CD4-positive, alpha-beta memory T cell (primary cell): ENCODE measurements at regions of chrX and their contacts with region 1.

Region 1: GRCh38 chrX:47581731-47582647 is at the start of gene TIMP1:
- DNase-seq: peak; percentile 63 to 90 (median 71)
- H3K4me3 ChIP-seq: peak within 1 kb of the TSS; percentile 15 to 38
- H3K4me3 Mint-ChIP-seq: peak within 1 kb of the TSS; percentile 67 to 89 (median 80)
- H3K27ac ChIP-seq: peak within 1 kb of the TSS; percentile 52
- H3K27ac Mint-ChIP-seq: peak within 1 kb of the TSS; percentile 80 to 95 (median 84)
- H3K4me1 ChIP-seq: peaks cover 45% of the 10 kb centered on the region
- H3K4me1 Mint-ChIP-seq: peaks cover 30 to 55% (median 44%) of the 10 kb centered on the region in 4 donors
- H3K27me3 ChIP-seq: no peaks in the 10 kb centered on the region
- H3K27me3 Mint-ChIP-seq: no peaks in the 10 kb centered on the region
- total RNA-seq, gene TIMP1: 147 to 156 TPM

Region 2: DNA sequence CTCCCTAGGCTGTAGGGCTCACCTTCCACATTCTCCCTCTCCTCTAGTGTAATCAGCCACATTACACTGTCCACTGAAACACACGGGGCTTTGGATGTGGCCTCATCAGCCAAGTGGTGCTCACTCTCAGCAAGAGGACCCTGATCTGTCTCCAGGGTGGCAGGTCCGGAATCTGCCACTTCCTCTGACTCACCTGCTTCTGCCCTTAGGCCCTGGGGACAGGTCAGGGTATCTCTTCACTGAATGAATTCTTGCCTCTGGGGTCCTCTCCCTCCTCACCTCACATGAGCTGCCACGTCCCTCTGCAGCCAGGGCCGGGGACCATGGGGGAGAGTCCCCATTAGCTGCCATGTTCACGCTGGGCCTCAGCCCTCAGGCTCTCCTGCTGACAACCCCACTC is 114.9 kb before region 1 on chrX:
- CTCF ChIA-PET with region 1: no interaction called
- POLR2A ChIA-PET with region 1: no interaction called
- intact Hi-C with region 1: no loop called
- DNase-seq: no peak
- H3K4me3 ChIP-seq: no peak overlapping the region
- H3K4me3 Mint-ChIP-seq: no peak overlapping the region
- H3K27ac ChIP-seq: no peak overlapping the region
- H3K27ac Mint-ChIP-seq: no peak overlapping the region
- H3K4me1 ChIP-seq: no peaks in the 10 kb centered on the region
- H3K4me1 Mint-ChIP-seq: peaks cover 3 to 11% (median 8%) of the 10 kb centered on the region in 4 donors
- H3K27me3 ChIP-seq: no peaks in the 10 kb centered on the region
- H3K27me3 Mint-ChIP-seq: no peaks in the 10 kb centered on the region

Region 3: GRCh38 chrX:47595716-47596251 is 13.8 kb after region 1 on chrX:
- CTCF ChIA-PET with region 1: no interaction called
- POLR2A ChIA-PET with region 1: interaction called, 42 read pairs
- intact Hi-C with region 1: no loop called
- DNase-seq: no peak
- H3K4me3 ChIP-seq: no peak overlapping the region
- H3K4me3 Mint-ChIP-seq: peak overlapping the region in 5 of 8 donors; percentile 20 to 66 (median 48)
- H3K27ac ChIP-seq: no peak overlapping the region
- H3K27ac Mint-ChIP-seq: peak overlapping the region in 6 of 7 donors; percentile 48 to 89 (median 66)
- H3K4me1 ChIP-seq: peaks cover 19% of the 10 kb centered on the region
- H3K4me1 Mint-ChIP-seq: peaks cover 9 to 24% (median 14%) of the 10 kb centered on the region in 4 donors
- H3K27me3 ChIP-seq: no peaks in the 10 kb centered on the region
- H3K27me3 Mint-ChIP-seq: no peaks in the 10 kb centered on the region

Region 4: DNA sequence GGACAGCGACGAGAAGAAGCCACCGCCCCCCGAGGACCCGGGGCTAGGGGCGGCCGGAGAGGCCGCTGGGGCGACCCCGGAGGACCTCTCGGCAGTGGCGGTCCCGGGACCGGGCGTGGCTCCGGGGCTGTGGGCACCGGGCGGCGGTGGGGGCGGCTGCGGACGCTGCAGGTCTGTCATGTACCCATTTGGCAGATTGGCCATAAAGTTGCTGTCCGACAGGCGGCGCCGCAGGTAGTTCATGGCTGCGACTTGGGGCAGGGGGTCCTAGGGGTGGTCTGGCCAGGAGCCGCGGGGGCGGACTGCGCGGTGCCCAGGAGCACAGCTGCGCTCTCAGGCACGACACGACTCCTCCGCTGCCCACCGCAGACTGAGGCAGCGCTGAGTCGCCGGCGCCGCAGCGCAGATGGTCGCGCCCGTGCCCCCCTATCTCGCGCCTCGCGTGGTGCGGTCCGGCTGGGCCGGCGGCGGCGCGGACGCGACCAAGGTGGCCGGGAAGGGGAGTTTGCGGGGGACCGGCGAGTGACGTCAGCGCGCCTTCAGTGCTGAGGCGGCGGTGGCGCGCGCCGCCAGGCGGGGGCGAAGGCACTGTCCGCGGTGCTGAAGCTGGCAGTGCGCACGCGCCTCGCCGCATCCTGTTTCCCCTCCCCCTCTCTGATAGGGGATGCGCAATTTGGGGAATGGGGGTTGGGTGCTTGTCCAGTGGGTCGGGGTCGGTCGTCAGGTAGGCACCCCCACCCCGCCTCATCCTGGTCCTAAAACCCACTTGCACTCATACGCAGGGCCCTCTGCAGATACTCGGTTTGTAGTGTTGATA is 37.7 kb after region 1 on chrX and contains the start of gene SYN1:
- CTCF ChIA-PET with region 1: no interaction called
- POLR2A ChIA-PET with region 1: interaction called, 6 read pairs
- intact Hi-C with region 1: loop called (anchors 5 kb)
- DNase-seq: peak; percentile 76 to 83 (median 81)
- H3K4me3 ChIP-seq: peak within 1 kb of the TSS in 1 of 2 donors; percentile 38
- H3K4me3 Mint-ChIP-seq: peak within 1 kb of the TSS; percentile 30 to 76 (median 65)
- H3K27ac ChIP-seq: no peak within 1 kb of the TSS
- H3K27ac Mint-ChIP-seq: peak within 1 kb of the TSS in 5 of 7 donors; percentile 23 to 82 (median 63)
- H3K4me1 ChIP-seq: peaks cover 5% of the 10 kb centered on the region
- H3K4me1 Mint-ChIP-seq: peaks cover 4 to 32% (median 18%) of the 10 kb centered on the region in 4 donors
- H3K27me3 ChIP-seq: no peaks in the 10 kb centered on the region
- H3K27me3 Mint-ChIP-seq: peaks cover 0 to 7% of the 10 kb centered on the region in 2 donors
- total RNA-seq, gene SYN1: 0.90 to 1.4 TPM